Panc1 (cell line): ENCODE measurements at regions of chr2 and their contacts with region 1.

Region 1: DNA sequence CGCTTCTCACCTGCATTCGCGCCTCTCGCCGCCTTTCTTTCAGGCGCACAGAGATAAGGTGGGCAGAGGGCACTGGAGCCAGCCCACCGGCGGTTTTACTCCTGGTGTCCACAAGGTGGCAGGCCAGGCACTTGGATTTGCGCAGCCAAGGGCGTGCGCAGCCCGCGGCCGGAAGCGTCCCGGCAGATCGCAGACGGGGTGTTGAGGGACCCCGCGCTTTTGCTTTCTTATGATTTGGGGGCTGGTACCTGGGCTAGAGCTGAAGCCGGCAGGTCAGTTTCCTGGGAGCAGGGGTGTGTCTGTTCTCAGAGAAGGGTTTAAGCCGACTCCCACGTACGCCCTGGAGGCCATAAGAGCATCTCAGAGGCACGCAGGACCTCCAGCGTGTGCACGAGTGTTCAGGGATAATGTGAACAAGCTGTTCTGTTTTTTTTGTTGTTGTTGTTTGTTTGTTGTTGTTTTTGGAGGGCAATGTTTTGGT is 305.6 kb upstream of the CXCR4 start:
- DNase-seq: peak; percentile 35
- ATAC-seq: peak; percentile 99
- H3K4me3 ChIP-seq: peak overlapping the region; percentile 35 to 40
- H3K27ac ChIP-seq: no peak overlapping the region
- H3K4me1 ChIP-seq: no peaks in the 10 kb centered on the region
- H3K27me3 ChIP-seq: peaks cover 17% of the 10 kb centered on the region
- CTCF ChIP-seq: peak; percentile 92

Region 2: GRCh38 chr2:136362676-136363390 is 60.7 kb before region 1 on chr2:
- CTCF ChIA-PET with region 1: no interaction called
- POLR2A ChIA-PET with region 1: no interaction called
- in situ Hi-C with region 1: no loop called
- intact Hi-C with region 1: no loop called
- DNase-seq: no peak
- ATAC-seq: no peak
- H3K4me3 ChIP-seq: no peak overlapping the region
- H3K27ac ChIP-seq: no peak overlapping the region
- H3K4me1 ChIP-seq: no peaks in the 10 kb centered on the region
- H3K27me3 ChIP-seq: no peaks in the 10 kb centered on the region
- CTCF ChIP-seq: no peak

Region 3: GRCh38 chr2:136613096-136613495 is 189.5 kb after region 1 on chr2:
- CTCF ChIA-PET with region 1: no interaction called
- POLR2A ChIA-PET with region 1: no interaction called
- in situ Hi-C with region 1: no loop called
- intact Hi-C with region 1: no loop called
- DNase-seq: no peak
- ATAC-seq: no peak
- H3K4me3 ChIP-seq: no peak overlapping the region
- H3K27ac ChIP-seq: no peak overlapping the region
- H3K4me1 ChIP-seq: no peaks in the 10 kb centered on the region
- H3K27me3 ChIP-seq: no peaks in the 10 kb centered on the region
- CTCF ChIP-seq: no peak

Region 4: DNA sequence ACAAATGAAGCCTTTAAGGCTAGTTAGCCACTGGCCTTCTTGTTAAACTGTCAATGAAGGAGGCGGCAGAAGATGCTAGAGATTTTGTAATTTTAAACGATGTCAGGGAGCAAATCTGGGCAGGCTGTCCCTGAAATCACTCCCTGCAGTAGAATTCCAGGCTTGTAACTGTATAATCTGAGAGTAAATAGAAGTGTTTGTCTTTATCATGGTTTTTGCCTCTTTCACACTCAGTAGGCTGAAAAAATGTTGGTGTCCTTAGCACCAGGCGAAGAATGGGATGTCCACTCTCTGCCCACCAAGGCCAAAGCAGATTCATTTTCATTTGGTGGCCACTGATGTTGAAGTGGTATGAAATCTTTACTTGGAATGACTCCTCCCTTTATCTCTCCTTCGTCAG is 204.9 kb after region 1 on chr2:
- CTCF ChIA-PET with region 1: no interaction called
- POLR2A ChIA-PET with region 1: no interaction called
- in situ Hi-C with region 1: no loop called
- intact Hi-C with region 1: no loop called
- DNase-seq: no peak
- ATAC-seq: no peak
- H3K4me3 ChIP-seq: no peak overlapping the region
- H3K27ac ChIP-seq: no peak overlapping the region
- H3K4me1 ChIP-seq: no peaks in the 10 kb centered on the region
- H3K27me3 ChIP-seq: no peaks in the 10 kb centered on the region
- CTCF ChIP-seq: no peak

Region 5: GRCh38 chr2:136738044-136738443 is 314.5 kb after region 1 on chr2:
- CTCF ChIA-PET with region 1: no interaction called
- POLR2A ChIA-PET with region 1: no interaction called
- in situ Hi-C with region 1: no loop called
- intact Hi-C with region 1: loop called (anchors 5 kb)
- DNase-seq: no peak
- ATAC-seq: no peak
- H3K4me3 ChIP-seq: no peak overlapping the region
- H3K27ac ChIP-seq: no peak overlapping the region
- H3K4me1 ChIP-seq: no peaks in the 10 kb centered on the region
- H3K27me3 ChIP-seq: no peaks in the 10 kb centered on the region
- CTCF ChIP-seq: no peak

Region 6: DNA sequence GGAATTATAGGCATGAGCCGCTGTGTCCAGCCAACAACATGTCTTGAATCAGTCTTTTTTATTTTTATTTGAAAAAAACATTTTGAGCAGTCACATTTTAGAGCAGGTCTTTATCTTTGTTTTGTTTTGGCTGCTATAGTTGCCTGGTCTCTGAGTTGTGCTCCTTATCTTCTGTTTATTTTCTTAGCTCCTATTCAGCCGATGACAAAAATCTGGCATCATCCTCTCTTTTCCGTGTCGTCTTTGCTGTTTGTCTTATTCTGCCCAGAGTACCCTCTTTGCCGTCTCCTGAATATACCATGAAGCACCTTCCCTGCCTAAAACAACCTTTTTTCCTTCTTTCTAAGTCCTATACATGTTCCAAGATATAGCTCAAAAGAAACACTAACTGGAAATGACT is 542.9 kb after region 1 on chr2:
- CTCF ChIA-PET with region 1: no interaction called
- POLR2A ChIA-PET with region 1: no interaction called
- in situ Hi-C with region 1: no loop called
- intact Hi-C with region 1: no loop called
- DNase-seq: no peak
- ATAC-seq: no peak
- H3K4me3 ChIP-seq: no peak overlapping the region
- H3K27ac ChIP-seq: no peak overlapping the region
- H3K4me1 ChIP-seq: no peaks in the 10 kb centered on the region
- H3K27me3 ChIP-seq: no peaks in the 10 kb centered on the region
- CTCF ChIP-seq: no peak